ENCODE measurements at regions of chr11 and their contacts with region 1.

Region 1: GRCh38 chr11:66659763-66660162 is 17.9 kb downstream of the RBM4B start:
- DNase-seq: no peak
- ATAC-seq: no peak
- H3K4me3 Mint-ChIP-seq: no peak overlapping the region
- H3K27ac Mint-ChIP-seq: peak overlapping the region; percentile 46
- H3K4me1 Mint-ChIP-seq: peaks cover 9% of the 10 kb centered on the region
- H3K27me3 Mint-ChIP-seq: no peaks in the 10 kb centered on the region
- CTCF ChIP-seq: no peak

Region 2: DNA sequence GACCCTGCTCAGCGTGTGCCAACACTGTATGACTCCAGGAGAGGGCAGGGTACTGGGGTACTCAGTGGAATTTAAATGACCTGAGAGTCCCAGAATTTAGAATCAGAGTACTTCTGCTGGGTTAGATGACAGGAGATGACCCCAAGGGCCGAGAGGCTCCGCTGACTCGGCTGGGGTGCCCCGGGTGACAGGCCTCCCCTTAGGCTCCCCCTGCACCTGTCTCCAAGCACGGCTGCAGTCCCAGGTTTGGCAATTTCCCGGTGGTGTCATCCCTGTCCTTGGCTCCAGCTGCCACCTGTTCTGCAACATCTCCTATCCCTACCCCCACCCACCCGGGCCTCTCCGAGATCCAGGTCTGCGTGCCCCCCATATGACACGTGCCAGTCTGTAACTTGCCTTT is 111.7 kb before region 1 on chr11:
- CTCF ChIA-PET with region 1: no interaction called
- POLR2A ChIA-PET with region 1: no interaction called
- intact Hi-C with region 1: no loop called
- DNase-seq: no peak
- ATAC-seq: no peak
- H3K4me3 Mint-ChIP-seq: no peak overlapping the region
- H3K27ac Mint-ChIP-seq: no peak overlapping the region
- H3K4me1 Mint-ChIP-seq: peaks cover 16% of the 10 kb centered on the region
- H3K27me3 Mint-ChIP-seq: no peaks in the 10 kb centered on the region
- CTCF ChIP-seq: no peak

Region 3: DNA sequence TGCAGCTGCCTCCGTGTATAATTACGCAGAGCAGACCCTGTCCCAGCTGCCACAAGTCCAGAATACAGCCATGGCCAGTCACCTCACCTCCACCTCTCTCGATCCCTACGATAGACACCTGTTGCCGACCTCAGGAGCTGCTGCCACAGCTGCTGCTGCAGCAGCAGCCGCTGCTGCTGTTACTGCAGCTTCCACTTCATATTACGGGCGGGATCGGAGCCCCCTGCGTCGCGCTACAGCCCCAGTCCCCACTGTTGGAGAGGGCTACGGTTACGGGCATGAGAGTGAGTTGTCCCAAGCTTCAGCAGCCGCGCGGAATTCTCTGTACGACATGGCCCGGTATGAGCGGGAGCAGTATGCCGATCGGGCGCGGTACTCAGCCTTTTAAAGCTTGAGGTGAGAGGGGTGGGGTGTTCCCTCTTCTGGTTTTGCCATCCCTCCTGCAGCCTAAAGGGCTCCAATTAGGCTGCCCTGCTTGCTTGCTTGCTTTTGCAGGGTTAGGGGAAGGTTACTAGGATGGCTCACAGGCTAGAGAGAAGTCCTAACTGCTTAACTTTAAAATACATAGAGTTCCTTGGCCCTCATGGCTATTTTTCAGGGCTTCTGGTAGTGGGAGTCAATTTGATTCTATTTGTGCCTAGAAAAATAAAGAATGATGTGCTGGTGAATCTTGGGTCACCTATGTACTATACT is 15.9 kb before region 1 on chr11:
- CTCF ChIA-PET with region 1: interaction called, 3 read pairs
- POLR2A ChIA-PET with region 1: interaction called, 35 read pairs
- intact Hi-C with region 1: no loop called
- DNase-seq: no peak
- ATAC-seq: no peak
- H3K4me3 Mint-ChIP-seq: peak overlapping the region; percentile 83
- H3K27ac Mint-ChIP-seq: no peak overlapping the region
- H3K4me1 Mint-ChIP-seq: peaks cover 87% of the 10 kb centered on the region
- H3K27me3 Mint-ChIP-seq: no peaks in the 10 kb centered on the region
- CTCF ChIP-seq: no peak